CD4-positive, alpha-beta memory T cell (primary cell): ENCODE measurements at regions of chr7 and their contacts with region 1.

Region 1: DNA sequence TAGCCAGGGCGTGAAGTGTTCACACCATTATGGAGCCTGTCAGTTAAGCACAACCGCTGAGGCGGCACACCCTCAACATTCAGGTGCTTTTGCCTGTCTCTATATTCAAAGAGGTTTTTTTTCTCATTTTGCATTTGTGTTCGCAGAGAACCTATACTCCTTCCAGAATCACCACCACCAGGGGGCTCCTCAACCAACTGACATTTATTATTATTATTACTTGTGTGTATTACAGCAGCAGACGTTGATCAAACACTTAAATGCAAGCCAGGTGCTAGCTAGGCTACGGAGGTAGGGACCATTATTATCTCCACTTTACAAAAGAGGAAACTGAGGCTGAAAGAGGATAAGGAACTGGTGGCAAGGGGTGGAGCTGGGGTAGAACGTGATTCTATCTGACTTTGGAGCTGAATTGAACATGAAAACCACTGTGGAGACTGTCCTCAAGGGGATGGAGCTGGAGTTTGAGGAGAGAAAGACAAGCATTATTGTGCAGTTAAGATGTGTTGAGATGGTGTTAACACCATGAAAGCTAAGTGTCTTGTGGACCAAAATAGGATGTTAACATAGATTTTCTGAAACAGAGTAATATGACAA is 133.8 kb upstream of the PLXNA4 start:
- DNase-seq: peak in 4 of 5 donors; percentile 8 to 25 (median 15)
- H3K4me3 ChIP-seq: no peak overlapping the region
- H3K4me3 Mint-ChIP-seq: no peak overlapping the region
- H3K27ac ChIP-seq: no peak overlapping the region
- H3K27ac Mint-ChIP-seq: no peak overlapping the region
- H3K4me1 ChIP-seq: no peaks in the 10 kb centered on the region
- H3K4me1 Mint-ChIP-seq: peaks cover 0 to 3% (median 0%) of the 10 kb centered on the region in 4 donors
- H3K27me3 ChIP-seq: no peaks in the 10 kb centered on the region
- H3K27me3 Mint-ChIP-seq: no peaks in the 10 kb centered on the region

Region 2: DNA sequence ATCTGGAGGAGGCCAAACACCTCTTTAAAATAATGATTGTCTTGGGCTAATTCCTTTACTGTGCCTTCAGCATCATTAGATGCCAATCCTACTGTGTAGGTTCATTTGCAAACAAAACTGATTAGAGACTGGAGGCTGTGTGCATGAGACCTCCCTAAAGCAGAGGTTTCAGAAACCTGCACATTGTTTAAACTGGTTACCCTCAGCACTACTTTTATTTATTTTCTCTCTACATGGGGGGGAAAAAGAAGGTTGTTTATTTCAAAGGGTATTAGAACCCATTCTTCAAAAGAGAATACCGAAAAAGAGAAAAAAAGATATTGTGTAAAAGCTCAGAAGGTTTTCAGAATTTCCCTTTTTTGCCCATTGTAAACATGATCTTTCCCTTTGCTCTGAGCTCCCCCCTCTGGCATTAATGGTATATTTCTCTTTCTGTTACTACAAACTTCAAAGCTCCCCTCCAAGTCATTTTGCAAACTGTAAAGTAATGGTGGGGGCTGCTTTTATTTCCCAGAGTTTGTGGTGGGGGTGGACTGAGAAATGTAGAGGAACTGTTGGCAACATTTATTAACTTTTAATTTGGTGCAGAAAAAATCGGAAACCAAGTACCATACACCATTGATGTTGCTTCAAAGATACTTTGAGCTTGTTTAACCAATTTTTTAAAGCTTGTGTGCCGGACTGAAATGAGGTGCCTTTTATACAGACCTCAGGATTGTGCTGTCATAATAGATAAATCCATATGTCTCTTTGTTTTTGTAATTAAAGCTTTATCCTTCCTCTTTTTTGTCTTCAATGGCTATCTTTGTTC is 724.2 kb after region 1 on chr7:
- CTCF ChIA-PET with region 1: interaction called, 17 read pairs
- POLR2A ChIA-PET with region 1: no interaction called
- intact Hi-C with region 1: no loop called
- DNase-seq: peak in 3 of 5 donors; percentile 7 to 11 (median 11)
- H3K4me3 ChIP-seq: no peak overlapping the region
- H3K4me3 Mint-ChIP-seq: no peak overlapping the region
- H3K27ac ChIP-seq: no peak overlapping the region
- H3K27ac Mint-ChIP-seq: peak overlapping the region in 2 of 7 donors; percentile 4 to 13
- H3K4me1 ChIP-seq: peaks cover 3% of the 10 kb centered on the region
- H3K4me1 Mint-ChIP-seq: peaks cover 0 to 21% (median 3%) of the 10 kb centered on the region in 4 donors
- H3K27me3 ChIP-seq: no peaks in the 10 kb centered on the region
- H3K27me3 Mint-ChIP-seq: no peaks in the 10 kb centered on the region